ENCODE measurements at regions of chr14 and their contacts with region 1.

Region 1: GRCh38 chr14:52824507-52824906 is 33.1 kb upstream of the GNPNAT1 start:
- DNase-seq: no peak
- ATAC-seq: no peak

Region 2: DNA sequence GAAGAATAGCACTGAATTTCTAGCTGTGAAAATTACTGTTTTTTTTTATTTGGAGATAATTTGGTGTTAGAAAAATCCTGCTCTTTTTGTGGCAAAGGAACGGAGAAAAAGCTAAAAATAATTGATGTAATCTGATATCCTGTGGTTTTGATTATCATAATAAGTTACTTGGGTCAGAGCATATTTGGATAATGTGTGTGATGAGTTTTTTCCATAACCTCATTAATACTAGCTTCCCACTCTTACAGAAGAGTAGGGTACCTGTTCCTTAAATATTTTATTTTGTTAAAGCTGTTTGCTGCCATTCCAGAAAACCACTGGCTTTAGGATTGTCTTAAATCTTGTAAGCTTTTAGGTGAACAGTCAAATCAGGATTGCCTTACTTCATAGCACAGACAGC is 112.8 kb before region 1 on chr14:
- intact Hi-C with region 1: no loop called
- DNase-seq: no peak
- ATAC-seq: no peak

Region 3: GRCh38 chr14:52961060-52961639 is 136.6 kb after region 1 on chr14:
- intact Hi-C with region 1: loop called (anchors 1 to 5 kb)
- DNase-seq: peak; percentile 42
- ATAC-seq: peak; percentile 92 to 95

Region 4: GRCh38 chr14:53044486-53044885 is 220.0 kb after region 1 on chr14:
- intact Hi-C with region 1: loop called in 1 of 2 experiments (anchors 10 kb)
- DNase-seq: no peak
- ATAC-seq: peak in 1 of 2 donors; percentile 55

Region 5: GRCh38 chr14:53055003-53055402 is 230.5 kb after region 1 on chr14:
- intact Hi-C with region 1: loop called in 1 of 2 experiments (anchors 2 kb)
- DNase-seq: no peak
- ATAC-seq: peak; percentile 65 to 85